ENCODE measurements at regions of chr4 and their contacts with region 1.

Region 1: DNA sequence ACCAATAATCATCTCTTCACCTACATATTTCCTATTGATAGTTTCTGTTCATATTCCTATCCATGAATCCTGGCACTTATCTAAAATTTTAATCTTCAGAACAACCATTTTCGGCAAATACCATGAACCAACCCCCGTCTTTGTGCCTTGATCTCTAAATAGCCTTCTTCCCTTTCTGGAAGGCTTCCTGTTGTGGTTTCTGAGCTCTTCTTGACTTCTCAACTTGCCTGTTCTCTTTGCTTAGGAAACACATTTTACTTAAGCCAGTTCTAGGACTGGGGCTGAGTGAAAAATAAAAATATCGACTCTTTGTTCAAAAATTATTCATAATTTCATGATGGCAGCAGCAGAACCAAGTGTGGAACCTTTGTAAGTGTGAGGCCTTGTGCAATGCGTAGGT is 882.4 kb downstream of the C4orf33 start:
- DNase-seq: no peak
- ATAC-seq: no peak

Region 2: DNA sequence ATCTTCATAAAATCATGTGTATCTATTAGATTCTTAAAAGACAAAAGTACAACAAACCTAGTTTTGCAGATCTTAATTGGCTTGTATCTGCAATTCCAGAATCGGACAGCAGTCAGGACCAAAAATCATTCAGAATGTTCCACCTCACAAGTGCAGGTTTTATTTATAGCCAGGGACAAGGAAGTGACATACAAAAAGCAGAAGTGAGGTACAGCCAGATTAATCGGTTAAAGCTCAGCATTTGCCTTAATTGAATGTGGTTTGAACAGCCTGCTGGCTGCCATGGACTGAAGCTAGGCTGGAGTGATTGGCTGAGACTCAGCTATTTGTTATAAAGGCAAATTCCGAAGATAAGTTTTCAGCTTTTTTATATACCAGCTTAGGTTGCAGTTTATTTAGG is 50.2 kb after region 1 on chr4:
- intact Hi-C with region 1: loop called (anchors 5 kb)
- DNase-seq: no peak
- ATAC-seq: no peak